Right ventricle myocardium inferior (tissue), 1 donor: ENCODE measurements at regions of chr1 and their contacts with region 1.

Region 1: GRCh38 chr1:71521655-71522264 is 440.9 kb upstream of the ZRANB2 start:
- DNase-seq: no peak
- ATAC-seq: no peak

Region 2: GRCh38 chr1:71080739-71081696 is 440.7 kb before region 1 on chr1 and contains the start of gene ZRANB2:
- intact Hi-C with region 1: loop called (anchors 10 kb)
- DNase-seq: peak; percentile 91
- ATAC-seq: peak; percentile 98
- total RNA-seq, gene ZRANB2: 46.5 TPM

Region 3: DNA sequence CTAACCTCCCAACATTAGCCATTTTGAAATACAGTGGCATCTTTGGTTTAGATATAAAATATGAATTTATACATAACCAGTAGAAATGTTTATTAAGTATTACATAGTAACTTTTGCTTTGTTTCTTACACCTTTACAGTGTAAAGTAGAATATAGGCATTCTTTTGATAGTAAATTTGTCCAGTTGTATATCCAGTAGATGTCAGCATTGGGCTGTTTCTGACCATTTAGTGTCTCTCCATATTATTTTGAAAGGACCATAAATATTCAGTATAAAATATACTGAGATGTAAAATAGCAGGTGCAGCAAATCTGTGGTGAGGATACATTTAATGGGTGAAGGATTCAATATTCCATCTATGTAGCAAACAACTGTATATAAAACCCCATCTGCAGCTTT is 325.1 kb before region 1 on chr1:
- intact Hi-C with region 1: loop called (anchors 5 kb)
- DNase-seq: no peak
- ATAC-seq: peak; percentile 47